Colonic mucosa (tissue), 4 donors: ENCODE measurements at regions of chr15 and their contacts with region 1.

Region 1: DNA sequence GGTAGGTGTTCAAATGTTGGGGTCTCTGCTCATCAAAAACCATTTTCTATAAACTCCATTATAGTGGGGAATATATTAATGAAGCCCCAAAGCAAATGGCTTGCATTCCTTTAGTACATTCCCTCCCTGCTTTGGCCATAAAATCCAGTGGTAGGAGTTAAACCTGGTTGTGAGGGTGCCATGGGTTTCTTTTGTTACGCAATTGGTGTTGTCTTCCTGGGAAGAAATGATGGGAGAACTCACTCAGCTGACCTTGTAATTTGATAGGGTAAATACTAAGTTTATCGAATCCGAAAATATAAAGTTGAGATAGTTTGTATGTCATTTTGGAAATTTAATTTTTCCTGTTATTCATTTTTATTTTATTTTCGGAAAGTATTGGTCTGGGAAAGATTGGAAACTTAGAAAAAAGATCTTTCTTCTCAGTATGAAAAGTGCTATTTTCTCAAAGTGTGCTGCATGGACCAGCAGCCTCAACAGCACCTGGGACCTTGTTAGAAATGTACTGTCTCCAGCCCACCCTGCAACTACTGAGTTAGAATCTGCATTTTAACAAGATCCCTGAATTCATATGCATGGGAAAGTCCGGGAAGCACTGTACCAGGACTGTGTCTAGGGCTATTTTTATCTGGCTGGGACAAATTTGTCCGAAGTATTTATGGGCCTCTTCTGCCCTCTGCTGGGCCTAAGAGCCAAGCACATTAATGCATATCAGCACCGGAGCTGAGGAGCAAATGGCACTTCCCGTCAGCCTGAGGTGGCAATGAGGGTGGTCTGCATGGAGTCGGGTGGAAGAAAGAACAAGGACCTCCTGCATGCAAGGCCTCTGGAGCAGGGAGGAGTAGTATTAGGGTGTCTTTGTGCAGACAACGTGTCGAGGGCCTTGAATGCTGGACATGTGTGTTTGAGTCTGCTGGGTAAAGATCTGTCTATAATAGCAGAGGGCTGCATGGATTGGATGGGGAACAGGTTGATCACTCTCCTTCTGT is 54.7 kb downstream of the FAM81A start:
- DNase-seq: peak; percentile 68
- H3K4me3 ChIP-seq: no peak overlapping the region
- H3K27ac ChIP-seq: no peak overlapping the region
- H3K4me1 ChIP-seq: no peaks in the 10 kb centered on the region
- H3K27me3 ChIP-seq: no peaks in the 10 kb centered on the region
- CTCF ChIP-seq: peak; percentile 79

Region 2: DNA sequence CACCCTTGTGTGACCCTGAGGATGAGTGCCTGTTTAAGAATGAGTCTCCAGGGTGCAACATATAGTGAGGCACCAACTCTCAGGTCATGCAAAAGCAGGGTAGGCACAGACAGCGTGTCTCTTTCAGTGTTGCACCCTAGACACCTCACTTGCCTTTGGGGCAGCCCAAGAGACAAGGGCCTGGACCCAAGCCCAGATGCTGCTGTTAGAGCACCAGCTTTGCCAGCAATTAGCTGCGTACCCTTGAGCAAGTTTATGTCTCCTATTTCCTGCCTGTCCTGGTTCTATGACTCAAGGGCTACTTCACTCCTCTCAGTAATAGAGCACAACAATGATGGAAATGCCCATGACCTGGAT is 1231.8 kb before region 1 on chr15:
- intact Hi-C with region 1: no loop called
- DNase-seq: no peak
- H3K4me3 ChIP-seq: no peak overlapping the region
- H3K27ac ChIP-seq: no peak overlapping the region
- H3K4me1 ChIP-seq: no peaks in the 10 kb centered on the region
- H3K27me3 ChIP-seq: no peaks in the 10 kb centered on the region
- CTCF ChIP-seq: no peak

Region 3: GRCh38 chr15:58980351-58980939 is 512.2 kb before region 1 on chr15:
- intact Hi-C with region 1: loop called (anchors 5 kb)
- DNase-seq: no peak
- H3K4me3 ChIP-seq: no peak overlapping the region
- H3K27ac ChIP-seq: no peak overlapping the region
- H3K4me1 ChIP-seq: peaks cover 4% of the 10 kb centered on the region
- H3K27me3 ChIP-seq: no peaks in the 10 kb centered on the region
- CTCF ChIP-seq: peak; percentile 29

Region 4: DNA sequence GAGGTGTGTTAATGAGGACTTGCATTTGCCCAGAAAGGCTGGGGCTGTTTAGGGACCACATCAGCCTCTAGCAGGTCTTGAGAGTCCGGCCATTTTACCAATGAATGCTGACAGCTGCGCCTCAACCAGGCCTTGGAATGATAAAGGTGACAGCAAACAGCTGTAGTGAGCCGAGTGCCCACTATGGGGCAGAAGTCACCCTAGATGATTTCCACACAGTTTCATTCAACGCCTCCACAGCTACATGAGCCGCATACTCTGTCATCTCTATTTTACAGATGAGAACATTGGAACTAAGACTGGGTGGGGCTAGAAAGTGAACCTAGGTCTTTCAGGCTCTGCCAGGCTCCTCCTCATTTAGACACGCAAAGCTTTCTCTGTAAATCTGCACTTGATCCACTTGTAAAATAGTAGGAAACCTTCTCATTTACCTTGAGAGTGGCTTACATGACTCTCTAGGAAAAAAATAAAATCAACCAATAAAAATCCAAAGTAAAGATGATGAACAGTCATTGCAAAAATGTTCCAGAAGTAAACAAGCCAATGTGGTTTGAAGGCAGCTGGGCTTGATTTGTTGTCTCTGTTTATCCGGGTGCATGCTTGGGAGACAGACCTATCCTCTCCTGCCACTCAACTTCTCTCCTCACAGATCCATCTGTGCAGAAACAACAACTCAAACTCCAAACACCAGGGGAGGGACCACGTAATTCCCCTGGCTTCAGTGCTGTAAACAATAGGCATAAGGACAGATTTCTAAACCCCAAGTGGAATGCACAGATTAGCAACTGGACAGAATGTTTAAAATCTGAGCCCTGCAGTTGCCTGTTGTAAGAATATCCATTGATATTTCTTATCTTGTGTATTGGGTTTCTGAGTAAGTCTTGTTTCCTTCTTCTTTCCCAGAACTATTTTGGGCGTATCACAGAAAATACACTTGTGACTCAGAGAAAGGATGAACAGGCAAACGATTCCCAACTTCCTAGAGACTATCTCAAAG is 317.6 kb before region 1 on chr15:
- intact Hi-C with region 1: loop called (anchors 5 kb)
- DNase-seq: peak; percentile 69
- H3K4me3 ChIP-seq: no peak overlapping the region
- H3K27ac ChIP-seq: peak overlapping the region; percentile 77
- H3K4me1 ChIP-seq: no peaks in the 10 kb centered on the region
- H3K27me3 ChIP-seq: no peaks in the 10 kb centered on the region
- CTCF ChIP-seq: peak; percentile 65

Region 5: DNA sequence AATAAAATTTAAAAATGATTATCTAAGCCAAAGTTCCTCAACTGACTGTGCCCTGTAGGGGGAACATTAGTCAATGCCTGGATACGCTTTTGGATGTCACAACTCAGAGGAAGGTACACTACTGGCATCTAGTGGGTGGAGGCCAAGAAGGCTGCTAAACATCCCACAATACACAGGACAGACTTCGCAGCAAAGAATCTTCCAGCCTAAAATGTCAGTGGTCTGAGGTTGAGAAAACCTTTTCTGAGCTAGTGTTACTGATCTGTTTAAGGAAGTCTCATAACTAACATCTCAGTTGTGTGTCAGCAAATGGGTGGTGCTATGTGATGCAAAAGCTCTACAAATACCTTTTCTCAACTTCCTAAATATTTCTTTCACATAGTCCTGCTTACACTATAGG is 307.0 kb before region 1 on chr15:
- intact Hi-C with region 1: no loop called
- DNase-seq: no peak
- H3K4me3 ChIP-seq: no peak overlapping the region
- H3K27ac ChIP-seq: no peak overlapping the region
- H3K4me1 ChIP-seq: no peaks in the 10 kb centered on the region
- H3K27me3 ChIP-seq: no peaks in the 10 kb centered on the region
- CTCF ChIP-seq: no peak

Region 6: GRCh38 chr15:59372352-59373211 is 120.1 kb before region 1 on chr15 and contains the start of gene MYO1E:
- intact Hi-C with region 1: loop called (anchors 10 kb)
- DNase-seq: peak; percentile 95
- H3K4me3 ChIP-seq: peak within 1 kb of the TSS; percentile 87
- H3K27ac ChIP-seq: peak within 1 kb of the TSS; percentile 99
- H3K4me1 ChIP-seq: no peaks in the 10 kb centered on the region
- H3K27me3 ChIP-seq: no peaks in the 10 kb centered on the region
- CTCF ChIP-seq: no peak
- total RNA-seq, gene MYO1E: 252 to 329 TPM